WTC11 (cell line): ENCODE measurements at regions of chr9 and their contacts with region 1.

Region 1: GRCh38 chr9:124420991-124421543 is 5.8 kb upstream of the PSMB7 start:
- DNase-seq: no peak
- ATAC-seq: no peak
- H3K4me3 Mint-ChIP-seq: no peak overlapping the region
- H3K27ac Mint-ChIP-seq: no peak overlapping the region
- H3K4me1 Mint-ChIP-seq: no peaks in the 10 kb centered on the region
- H3K27me3 Mint-ChIP-seq: peaks cover 9% of the 10 kb centered on the region
- CTCF ChIP-seq: no peak

Region 2: DNA sequence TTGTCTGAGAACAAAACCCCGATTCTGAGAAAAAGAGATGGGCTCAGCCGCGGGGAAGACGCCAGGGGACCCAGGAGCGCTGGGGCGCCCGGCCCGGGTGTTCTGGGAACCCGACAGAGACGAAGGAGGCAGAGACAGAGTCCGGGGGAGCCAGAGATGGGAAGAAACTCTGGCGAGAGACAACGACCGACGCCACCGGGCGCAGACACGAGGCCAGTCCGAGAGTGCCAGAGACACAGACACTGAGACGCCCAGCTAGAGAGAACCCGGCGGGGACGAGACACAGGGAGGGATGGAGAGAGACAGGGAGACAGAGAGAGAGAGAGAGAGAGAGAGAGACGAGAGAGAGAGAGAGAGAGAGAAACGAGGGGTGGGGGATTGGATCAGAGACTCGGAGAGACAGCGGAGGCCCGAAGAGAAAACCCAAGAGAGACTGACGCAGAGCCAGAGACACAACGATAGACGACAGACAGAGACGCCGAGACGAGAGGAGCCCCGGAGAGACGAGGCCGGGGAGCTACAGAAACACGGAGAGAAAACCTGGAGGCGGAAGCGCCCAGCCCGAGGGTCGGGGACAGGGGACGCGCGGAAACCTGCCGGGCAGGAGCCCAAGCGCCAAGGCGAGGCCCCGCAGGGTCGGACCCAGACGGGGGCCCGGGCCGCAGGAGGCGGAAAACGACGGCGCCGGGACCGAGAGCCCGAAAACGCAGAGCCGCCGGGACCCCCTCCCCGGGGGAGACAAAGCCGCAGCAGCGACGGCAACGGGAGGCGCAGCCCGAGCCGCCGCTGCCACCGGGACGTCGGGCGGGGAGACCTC is 82.9 kb after region 1 on chr9:
- CTCF ChIA-PET with region 1: interaction called, 11 read pairs
- POLR2A ChIA-PET with region 1: no interaction called
- DNase-seq: peak; percentile 35
- ATAC-seq: peak; percentile 3; the same call in 1 of the 2 replicates
- H3K4me3 Mint-ChIP-seq: peak overlapping the region; percentile 85
- H3K27ac Mint-ChIP-seq: no peak overlapping the region
- H3K4me1 Mint-ChIP-seq: peaks cover 13% of the 10 kb centered on the region
- H3K27me3 Mint-ChIP-seq: peaks cover 59% of the 10 kb centered on the region
- CTCF ChIP-seq: no peak